ENCODE measurements at regions of chr1 and their contacts with region 1.

Region 1: DNA sequence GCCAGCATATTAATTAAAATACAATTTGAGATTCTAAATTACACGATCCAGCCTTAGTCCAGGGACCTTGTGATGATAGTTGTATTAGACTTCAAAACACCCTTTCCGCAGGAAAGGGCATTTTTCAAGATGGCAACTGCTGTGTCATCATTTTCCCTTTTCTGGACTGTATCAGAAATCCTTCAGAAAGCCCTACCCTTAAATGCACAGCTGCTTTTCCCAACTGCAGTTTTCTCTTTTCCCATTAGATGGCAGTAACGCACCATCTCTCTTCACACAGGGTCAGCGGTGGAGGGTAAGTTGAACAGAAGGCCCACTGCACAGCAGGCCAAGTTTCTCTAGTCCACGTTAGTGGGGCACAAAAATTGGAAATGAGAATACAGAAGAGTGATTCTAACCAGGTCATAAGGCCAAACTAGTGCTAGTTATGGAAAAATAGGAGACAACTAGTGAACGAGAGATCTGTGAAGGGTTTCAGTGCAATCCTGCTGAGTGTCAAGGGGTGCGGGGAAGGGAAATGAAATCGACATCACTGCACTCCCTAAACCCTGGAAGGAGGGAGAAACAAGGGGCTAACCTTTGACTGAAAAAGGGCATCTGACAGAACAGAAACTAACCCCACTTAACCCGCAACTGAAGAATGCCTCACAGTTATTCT is 22.1 kb upstream of the TDRD10 start:
- DNase-seq: peak; percentile 76
- H3K4me3 ChIP-seq: no peak overlapping the region
- H3K27ac ChIP-seq: no peak overlapping the region
- H3K27me3 ChIP-seq: no peaks in the 10 kb centered on the region
- CTCF ChIP-seq: peak; percentile 95

Region 2: GRCh38 chr1:154495496-154496273 is 15.8 kb after region 1 on chr1:
- CTCF ChIA-PET with region 1: interaction called, 10 read pairs
- POLR2A ChIA-PET with region 1: no interaction called
- DNase-seq: no peak
- H3K4me3 ChIP-seq: no peak overlapping the region
- H3K27ac ChIP-seq: no peak overlapping the region
- H3K27me3 ChIP-seq: peaks cover 69% of the 10 kb centered on the region
- CTCF ChIP-seq: no peak

Region 3: DNA sequence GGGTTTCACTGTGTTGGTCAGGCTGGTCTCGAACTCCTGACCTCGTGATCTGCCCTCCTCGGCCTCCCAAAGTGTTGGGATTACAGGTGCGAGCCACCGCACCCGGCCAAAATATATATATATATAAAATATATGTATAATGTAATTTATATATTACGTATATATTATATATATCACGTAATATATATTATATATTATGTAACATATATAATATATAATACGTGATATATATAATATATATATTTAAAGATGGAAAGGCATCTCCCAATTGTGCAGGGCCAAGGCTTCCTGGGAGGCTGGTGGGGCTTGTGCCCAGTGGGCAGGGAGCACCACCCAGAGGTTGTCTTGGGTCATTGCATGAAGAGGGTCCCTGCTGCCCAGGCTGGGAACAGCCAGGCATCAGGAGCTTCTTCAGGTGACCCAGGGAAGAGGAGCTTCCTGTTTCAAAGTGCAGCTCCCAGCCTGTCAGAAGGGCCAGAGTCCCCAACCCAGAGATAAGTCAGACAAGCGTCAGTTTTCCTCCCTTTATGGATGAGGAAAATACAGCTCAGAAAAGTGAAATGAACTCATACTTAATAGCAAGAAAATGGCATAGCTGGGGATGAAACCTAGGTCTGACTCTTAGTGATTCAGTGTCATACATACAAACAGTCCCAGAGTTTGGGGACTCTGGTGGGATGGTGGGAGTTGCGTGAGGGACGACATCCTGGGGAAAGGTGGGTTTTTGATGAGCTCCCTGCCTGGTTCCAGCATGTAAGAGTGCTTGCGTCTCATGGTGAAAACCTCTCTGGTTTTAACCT is 66.6 kb after region 1 on chr1:
- CTCF ChIA-PET with region 1: interaction called, 122 read pairs
- POLR2A ChIA-PET with region 1: interaction called, 3 read pairs
- DNase-seq: no peak
- H3K4me3 ChIP-seq: no peak overlapping the region
- H3K27ac ChIP-seq: no peak overlapping the region
- H3K27me3 ChIP-seq: peaks cover 17% of the 10 kb centered on the region
- CTCF ChIP-seq: peak; percentile 83